Common myeloid progenitor, CD34-positive (primary cell): ENCODE measurements at regions of chr1 and their contacts with region 1.

Region 1: DNA sequence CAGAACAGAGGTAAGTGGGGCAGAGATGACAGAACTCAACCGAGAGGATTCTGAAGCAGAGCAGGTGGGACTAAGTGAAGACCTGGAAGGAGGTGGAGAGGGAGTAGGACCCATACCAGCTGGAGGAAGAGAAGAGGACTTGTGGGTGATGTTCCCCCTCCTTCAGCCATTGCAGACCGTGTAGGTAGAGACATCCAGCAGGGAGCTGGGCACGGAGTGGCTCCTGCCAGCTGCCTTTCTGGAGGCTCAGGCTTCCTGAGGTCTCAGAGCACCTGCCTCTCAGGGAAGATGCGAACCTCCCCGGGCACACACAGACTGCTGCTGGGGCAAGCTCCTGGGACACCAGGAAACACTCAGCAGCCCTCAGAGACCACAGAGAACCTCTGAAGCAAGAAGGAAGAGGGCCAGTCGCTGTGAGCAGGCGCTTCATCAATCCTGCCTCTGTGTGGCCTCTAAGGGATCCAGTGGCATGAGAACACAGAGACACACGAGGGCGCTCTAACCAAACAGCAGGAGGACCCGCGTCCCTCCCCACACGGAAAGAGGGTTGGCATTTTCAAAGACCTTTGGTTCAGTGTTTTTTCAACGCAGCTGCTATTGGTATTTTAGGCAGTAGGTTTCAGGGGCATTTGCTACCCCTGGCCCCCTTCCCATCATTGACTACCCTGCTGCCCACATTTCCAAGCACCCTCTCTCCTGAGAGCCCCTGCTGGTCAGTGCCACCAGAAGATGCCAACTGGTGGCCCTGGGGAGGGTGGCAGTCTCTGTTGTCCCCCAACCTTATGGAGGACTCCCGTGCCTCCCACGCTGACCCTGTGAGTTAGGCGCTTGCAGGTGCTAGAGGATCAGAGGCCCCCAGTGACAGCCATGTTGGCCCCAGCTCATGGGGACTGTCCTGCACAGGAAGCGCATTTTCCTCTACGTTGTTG is 89.6 kb upstream of the EDN2 start:
- DNase-seq: peak; percentile 85 to 95 (median 92)
- H3K4me3 ChIP-seq: no peak overlapping the region
- H3K27ac ChIP-seq: no peak overlapping the region
- H3K4me1 ChIP-seq: peaks cover 0 to 25% (median 7%) of the 10 kb centered on the region in 4 experiments
- H3K27me3 ChIP-seq: no peaks in the 10 kb centered on the region

Region 2: GRCh38 chr1:41658431-41659158 is 84.5 kb after region 1 on chr1:
- CTCF ChIA-PET with region 1: interaction called, 13 read pairs
- POLR2A ChIA-PET with region 1: no interaction called
- DNase-seq: peak; percentile 38 to 84 (median 76)
- H3K4me3 ChIP-seq: peak overlapping the region in 2 of 7 experiments; percentile 8 to 36
- H3K27ac ChIP-seq: no peak overlapping the region
- H3K4me1 ChIP-seq: peaks cover 1 to 43% (median 29%) of the 10 kb centered on the region in 4 experiments
- H3K27me3 ChIP-seq: peaks cover 0 to 6% (median 0%) of the 10 kb centered on the region in 5 experiments